H1 (cell line): ENCODE measurements at regions of chr11 and their contacts with region 1.

Region 1: GRCh38 chr11:8033305-8034105 is 46.4 kb downstream of the EIF3F start:
- DNase-seq: peak in 1 of 2 experiments; percentile 88
- H3K4me3 ChIP-seq: 0 out of 8 replicates have a peak overlapping the region, but pooled peaks of 1 of the 4 experiments have one; percentile 29
- H3K27ac ChIP-seq: no peak overlapping the region
- H3K4me1 ChIP-seq: peaks cover 0 to 13% (median 4%) of the 10 kb centered on the region in 4 experiments; a peak in 5 of 7 replicates
- H3K27me3 ChIP-seq: peaks cover 0 to 14% (median 6%) of the 10 kb centered on the region in 4 experiments; a peak in 5 of 7 replicates
- CTCF ChIP-seq: peak; percentile 85 to 91 (median 88)
- EP300 ChIP-seq: no peak
- POLR2A ChIP-seq: no peak
- RAD21 ChIP-seq: peak; percentile 83

Region 2: DNA sequence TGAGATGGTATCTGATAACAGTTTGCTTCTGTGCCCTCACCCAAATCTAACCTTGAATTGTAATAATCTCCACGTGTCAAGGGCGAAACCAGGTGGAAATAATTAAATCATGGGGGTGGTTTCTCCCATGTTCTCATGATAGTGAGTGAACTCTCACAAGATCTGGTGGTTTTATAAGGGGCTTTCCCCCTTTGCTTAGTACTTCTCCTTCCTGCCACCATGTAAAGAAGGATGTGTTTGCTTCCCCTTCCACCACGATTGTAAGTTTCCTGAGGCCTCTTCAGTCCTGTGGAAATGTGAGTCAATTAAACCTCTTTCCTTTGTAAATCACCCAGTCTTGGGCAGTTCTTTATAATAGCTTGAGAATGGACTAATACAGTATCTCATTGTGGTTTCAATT is 318.7 kb before region 1 on chr11:
- CTCF ChIA-PET with region 1: no interaction called
- POLR2A ChIA-PET with region 1: no interaction called
- DNase-seq: no peak
- H3K4me3 ChIP-seq: no peak overlapping the region
- H3K27ac ChIP-seq: no peak overlapping the region
- H3K4me1 ChIP-seq: no peaks in the 10 kb centered on the region
- H3K27me3 ChIP-seq: no peaks in the 10 kb centered on the region
- CTCF ChIP-seq: no peak
- EP300 ChIP-seq: no peak
- POLR2A ChIP-seq: no peak
- RAD21 ChIP-seq: no peak

Region 3: DNA sequence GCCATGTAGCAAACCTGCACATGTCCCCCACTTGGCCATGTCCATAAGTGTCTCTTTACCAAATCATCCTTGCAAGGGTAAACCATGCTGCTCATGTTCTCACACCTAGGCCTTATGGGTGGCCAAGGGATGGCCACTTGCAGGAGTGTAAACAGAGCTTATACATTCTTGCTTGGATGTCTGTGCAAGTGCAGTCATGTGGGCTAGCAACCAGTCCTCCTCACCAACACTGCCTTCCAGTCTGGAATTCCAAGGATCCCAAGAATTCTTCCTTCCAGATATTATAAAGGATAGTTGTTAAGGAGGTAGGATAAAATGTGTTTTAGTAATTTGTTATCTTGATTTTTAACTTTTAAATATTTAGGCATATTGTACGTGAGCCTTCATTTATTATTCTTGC is 189.0 kb before region 1 on chr11:
- CTCF ChIA-PET with region 1: no interaction called
- POLR2A ChIA-PET with region 1: no interaction called
- DNase-seq: no peak
- H3K4me3 ChIP-seq: no peak overlapping the region
- H3K27ac ChIP-seq: no peak overlapping the region
- H3K4me1 ChIP-seq: 0 out of 7 replicates have a peak, but pooled peaks cover 0 to 5% (median 0%) of the 10 kb centered on the region in 4 experiments
- H3K27me3 ChIP-seq: no peaks in the 10 kb centered on the region
- CTCF ChIP-seq: no peak
- EP300 ChIP-seq: no peak
- POLR2A ChIP-seq: no peak
- RAD21 ChIP-seq: no peak

Region 4: DNA sequence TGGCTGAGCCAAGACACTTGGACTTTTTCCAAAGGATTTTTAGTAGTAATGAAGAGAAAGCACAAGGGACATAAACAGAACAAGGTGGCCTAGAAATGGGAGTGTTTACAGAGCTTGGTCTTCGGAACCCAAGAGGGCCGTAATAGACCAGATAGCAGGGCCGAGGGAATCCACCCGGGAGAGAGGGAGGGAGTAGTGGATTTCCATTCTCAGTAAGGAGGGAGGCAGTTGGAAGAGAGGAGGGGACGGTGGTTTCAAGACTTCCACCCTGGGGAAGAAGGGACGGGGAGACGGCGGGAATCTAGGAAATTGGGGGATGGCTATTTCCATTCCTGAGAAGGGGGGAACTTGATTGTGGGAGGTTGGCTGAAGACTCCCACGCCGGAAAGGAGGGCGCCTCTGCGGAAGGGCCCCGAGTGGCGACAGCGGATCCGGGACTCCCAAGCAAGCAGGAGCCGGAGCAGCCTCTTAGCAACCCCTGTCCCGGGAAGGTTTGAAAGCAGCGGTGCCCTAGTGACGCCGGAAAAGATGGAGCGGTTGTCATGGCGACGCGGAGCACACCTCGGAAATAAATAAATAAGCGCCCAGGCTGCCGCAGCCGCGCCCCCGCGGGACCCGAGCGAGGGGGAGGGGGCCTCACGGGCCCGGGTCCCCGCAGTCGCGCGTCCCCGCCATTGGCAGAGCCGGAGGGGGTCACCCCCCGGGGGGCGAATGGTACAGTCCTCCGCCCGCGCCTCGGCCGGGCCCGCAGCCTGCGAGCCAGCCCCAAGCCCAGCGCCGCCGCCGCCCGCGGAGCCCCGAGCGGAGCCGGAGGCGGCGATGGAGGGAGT is 14.8 kb before region 1 on chr11:
- CTCF ChIA-PET with region 1: interaction called, 85 read pairs
- POLR2A ChIA-PET with region 1: interaction called, 8 read pairs
- DNase-seq: peak in 1 of 2 experiments; percentile 87
- H3K4me3 ChIP-seq: peak overlapping the region; percentile 56 to 68 (median 61)
- H3K27ac ChIP-seq: no peak overlapping the region
- H3K4me1 ChIP-seq: peaks cover 6 to 17% (median 13%) of the 10 kb centered on the region in 4 experiments; a peak in 6 of 7 replicates
- H3K27me3 ChIP-seq: peaks cover 14 to 59% (median 52%) of the 10 kb centered on the region in 4 experiments
- CTCF ChIP-seq: no peak
- EP300 ChIP-seq: peak in 1 of 2 experiments; percentile 67; a peak in 1 of 3 replicates
- POLR2A ChIP-seq: no peak; a peak in 1 of 3 replicates
- RAD21 ChIP-seq: no peak

Region 5: DNA sequence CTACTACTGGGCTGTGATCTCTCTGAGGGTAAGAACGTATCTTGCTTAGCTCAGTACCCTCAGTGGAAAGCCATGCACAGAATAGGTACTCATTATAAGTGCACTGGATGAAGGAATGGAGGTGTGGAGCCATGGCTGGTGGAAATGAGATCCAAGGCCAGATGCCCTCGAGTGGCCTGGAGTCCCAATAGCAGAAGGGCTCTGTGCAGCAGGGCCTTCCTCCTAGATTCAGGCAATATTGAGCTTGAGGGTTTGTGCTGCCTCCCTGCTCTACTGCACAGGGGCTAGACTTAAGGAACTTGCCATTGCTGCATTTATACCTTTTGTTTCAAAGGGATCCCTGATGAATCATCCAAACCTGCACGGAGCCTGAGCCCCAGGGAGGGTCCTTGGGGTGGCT is 13.9 kb after region 1 on chr11:
- CTCF ChIA-PET with region 1: interaction called, 57 read pairs
- POLR2A ChIA-PET with region 1: no interaction called
- DNase-seq: peak in 1 of 2 experiments; percentile 16
- H3K4me3 ChIP-seq: no peak overlapping the region
- H3K27ac ChIP-seq: no peak overlapping the region
- H3K4me1 ChIP-seq: no peaks in the 10 kb centered on the region
- H3K27me3 ChIP-seq: no peaks in the 10 kb centered on the region
- CTCF ChIP-seq: no peak
- EP300 ChIP-seq: no peak
- POLR2A ChIP-seq: no peak
- RAD21 ChIP-seq: no peak

Region 6: GRCh38 chr11:8056810-8057463 is 23.4 kb after region 1 on chr11:
- CTCF ChIA-PET with region 1: interaction called, 56 read pairs
- POLR2A ChIA-PET with region 1: no interaction called
- DNase-seq: peak in 1 of 2 experiments; percentile 36
- H3K4me3 ChIP-seq: no peak overlapping the region
- H3K27ac ChIP-seq: no peak overlapping the region
- H3K4me1 ChIP-seq: peaks cover 0 to 5% (median 0%) of the 10 kb centered on the region in 4 experiments; a peak in 2 of 7 replicates
- H3K27me3 ChIP-seq: no peaks in the 10 kb centered on the region
- CTCF ChIP-seq: no peak
- EP300 ChIP-seq: no peak
- POLR2A ChIP-seq: no peak
- RAD21 ChIP-seq: no peak

Region 7: GRCh38 chr11:8070417-8071115 is 37.1 kb after region 1 on chr11:
- CTCF ChIA-PET with region 1: interaction called, 40 read pairs
- POLR2A ChIA-PET with region 1: interaction called, 3 read pairs
- DNase-seq: no peak
- H3K4me3 ChIP-seq: no peak overlapping the region
- H3K27ac ChIP-seq: no peak overlapping the region
- H3K4me1 ChIP-seq: peaks cover 2 to 18% (median 7%) of the 10 kb centered on the region in 4 experiments
- H3K27me3 ChIP-seq: no peaks in the 10 kb centered on the region; a peak in 2 of 7 replicates
- CTCF ChIP-seq: peak in 1 of 3 experiments; percentile 15; a peak in 1 of 4 replicates
- EP300 ChIP-seq: no peak
- POLR2A ChIP-seq: no peak
- RAD21 ChIP-seq: peak; percentile 19 to 38; a peak in 3 of 4 replicates